Natural killer cell (primary cell): ENCODE measurements at regions of chr11 and their contacts with region 1.

Region 1: DNA sequence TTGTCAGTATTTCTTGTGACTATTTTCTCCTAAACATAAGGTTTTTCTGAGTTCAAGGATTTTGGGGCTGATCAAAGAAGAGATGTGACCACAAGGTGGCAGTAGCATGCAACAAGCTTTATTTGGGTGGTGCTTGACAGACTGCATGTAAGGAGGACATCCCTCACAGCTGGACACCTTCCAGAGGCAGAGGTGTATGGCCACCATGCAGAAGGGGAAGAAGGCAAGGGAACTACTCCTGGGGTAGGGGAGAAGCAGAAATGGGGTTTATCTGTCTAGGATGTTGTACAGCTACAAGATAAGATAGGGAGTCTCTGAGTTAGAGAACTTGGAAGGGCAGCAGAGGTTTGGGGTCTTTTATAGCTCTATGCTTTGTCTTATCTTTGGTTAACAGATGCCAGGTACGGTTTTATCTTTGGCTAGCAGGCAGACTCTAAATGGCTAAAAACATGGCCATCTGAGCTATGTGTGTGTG is 5.1 kb upstream of the BIRC2 start:
- DNase-seq: peak; percentile 51 to 92
- ATAC-seq: peak; percentile 41 to 63 (median 47)
- H3K4me3 ChIP-seq: no peak overlapping the region
- H3K4me3 Mint-ChIP-seq: peak overlapping the region; percentile 5
- H3K27ac ChIP-seq: no peak overlapping the region
- H3K27ac Mint-ChIP-seq: no peak overlapping the region
- H3K4me1 ChIP-seq: peaks cover 6% of the 10 kb centered on the region
- H3K4me1 Mint-ChIP-seq: peaks cover 17 to 18% of the 10 kb centered on the region in 2 donors
- H3K27me3 ChIP-seq: no peaks in the 10 kb centered on the region
- H3K27me3 Mint-ChIP-seq: no peaks in the 10 kb centered on the region
- CTCF ChIP-seq: peak; percentile 84

Region 2: GRCh38 chr11:102420547-102420946 is 78.7 kb after region 1 on chr11:
- intact Hi-C with region 1: no loop called
- DNase-seq: no peak
- ATAC-seq: no peak
- H3K4me3 ChIP-seq: no peak overlapping the region
- H3K4me3 Mint-ChIP-seq: no peak overlapping the region
- H3K27ac ChIP-seq: no peak overlapping the region
- H3K27ac Mint-ChIP-seq: no peak overlapping the region
- H3K4me1 ChIP-seq: peaks cover 12% of the 10 kb centered on the region
- H3K4me1 Mint-ChIP-seq: peaks cover 48 to 50% of the 10 kb centered on the region in 2 donors
- H3K27me3 ChIP-seq: no peaks in the 10 kb centered on the region
- H3K27me3 Mint-ChIP-seq: no peaks in the 10 kb centered on the region
- CTCF ChIP-seq: no peak

Region 3: DNA sequence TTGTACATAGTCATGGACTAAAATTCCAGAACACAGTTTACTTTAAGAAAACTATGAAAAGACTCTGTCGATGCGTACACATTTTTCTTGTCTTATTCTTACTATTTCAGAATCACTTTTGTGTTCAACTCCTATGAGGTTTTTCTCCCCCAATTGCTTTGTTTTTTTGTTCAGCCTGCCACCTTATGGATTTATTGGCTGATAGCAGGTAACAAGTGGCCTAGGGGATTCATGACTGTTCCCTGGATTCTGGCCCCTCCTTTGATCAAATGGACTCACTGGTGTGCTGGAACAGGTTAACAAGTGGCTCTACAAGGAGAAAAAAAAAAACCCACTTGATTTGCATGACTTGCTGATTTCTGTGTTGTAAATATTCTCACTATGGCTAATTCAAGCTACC is 272.6 kb after region 1 on chr11:
- intact Hi-C with region 1: loop called (anchors 5 kb)
- DNase-seq: peak in 1 of 2 donors; percentile 6
- ATAC-seq: no peak
- H3K4me3 ChIP-seq: no peak overlapping the region
- H3K4me3 Mint-ChIP-seq: no peak overlapping the region
- H3K27ac ChIP-seq: no peak overlapping the region
- H3K27ac Mint-ChIP-seq: no peak overlapping the region
- H3K4me1 ChIP-seq: no peaks in the 10 kb centered on the region
- H3K4me1 Mint-ChIP-seq: no peaks in the 10 kb centered on the region
- H3K27me3 ChIP-seq: no peaks in the 10 kb centered on the region
- H3K27me3 Mint-ChIP-seq: peaks cover 0 to 3% of the 10 kb centered on the region in 2 donors
- CTCF ChIP-seq: no peak

Region 4: DNA sequence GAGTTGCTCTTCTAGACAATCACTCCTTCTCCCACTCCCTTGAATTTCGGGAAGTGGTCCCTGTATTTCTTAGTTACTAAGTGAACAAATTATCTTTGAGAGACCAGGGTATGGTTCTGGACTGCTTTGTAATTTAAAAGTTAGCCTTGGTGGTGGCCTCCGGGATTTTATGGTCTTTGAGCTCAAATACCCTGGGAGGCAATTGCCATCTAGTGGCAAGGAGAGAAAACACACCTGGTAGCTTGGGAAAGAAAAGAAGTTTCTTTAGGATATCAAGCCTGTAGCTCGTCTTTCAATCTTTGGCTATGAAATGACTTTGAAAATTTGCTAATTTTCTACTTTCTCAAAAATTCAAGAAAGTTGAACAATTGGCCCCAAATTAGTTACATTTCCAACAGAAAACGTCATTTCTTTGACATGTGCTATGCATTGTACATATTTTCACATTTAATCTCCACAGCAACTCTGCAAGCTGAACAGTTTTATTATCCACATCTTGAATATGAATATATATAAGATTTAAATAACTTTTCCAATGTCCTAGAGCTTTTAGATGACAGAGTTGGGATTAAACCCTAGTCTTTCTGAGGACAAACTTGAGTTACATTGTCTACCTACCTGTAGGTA is 324.6 kb after region 1 on chr11:
- intact Hi-C with region 1: loop called (anchors 2 kb)
- DNase-seq: peak in 1 of 2 donors; percentile 61
- ATAC-seq: peak in 1 of 3 donors; percentile 44
- H3K4me3 ChIP-seq: no peak overlapping the region
- H3K4me3 Mint-ChIP-seq: no peak overlapping the region
- H3K27ac ChIP-seq: no peak overlapping the region
- H3K27ac Mint-ChIP-seq: no peak overlapping the region
- H3K4me1 ChIP-seq: no peaks in the 10 kb centered on the region
- H3K4me1 Mint-ChIP-seq: no peaks in the 10 kb centered on the region
- H3K27me3 ChIP-seq: no peaks in the 10 kb centered on the region
- H3K27me3 Mint-ChIP-seq: peaks cover 0 to 6% of the 10 kb centered on the region in 2 donors
- CTCF ChIP-seq: peak; percentile 58